ENCODE measurements at regions of chr3 and their contacts with region 1.

Region 1: GRCh38 chr3:88137836-88138235 is 11.9 kb upstream of the C3orf38 start:
- DNase-seq: no peak
- ATAC-seq: no peak
- H3K4me3 ChIP-seq: no peak overlapping the region
- H3K4me3 Mint-ChIP-seq: no peak overlapping the region
- H3K27ac ChIP-seq: no peak overlapping the region
- H3K27ac Mint-ChIP-seq: no peak overlapping the region
- H3K4me1 ChIP-seq: no peaks in the 10 kb centered on the region
- H3K4me1 Mint-ChIP-seq: peaks cover 0 to 5% (median 0%) of the 10 kb centered on the region in 7 donors
- H3K27me3 ChIP-seq: no peaks in the 10 kb centered on the region
- H3K27me3 Mint-ChIP-seq: no peaks in the 10 kb centered on the region

Region 2: DNA sequence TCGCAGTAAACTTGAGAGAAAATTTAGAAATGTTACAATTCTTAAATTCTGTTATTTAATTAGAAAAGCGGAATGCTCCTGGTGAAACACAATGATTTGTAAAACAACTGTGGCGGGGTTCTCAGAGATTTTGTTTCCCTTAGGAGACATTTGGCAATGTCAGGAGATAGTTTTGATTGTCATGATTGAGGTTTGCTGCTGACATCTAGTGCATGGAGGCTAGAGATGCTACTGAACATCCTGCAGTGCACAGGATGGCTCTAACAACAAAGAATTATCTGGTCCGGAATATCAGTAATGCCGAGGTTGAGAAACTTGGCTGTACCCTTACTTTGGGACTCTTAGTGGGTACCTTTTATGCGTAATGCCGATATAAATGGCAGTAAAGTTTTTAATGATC is 74.9 kb before region 1 on chr3:
- CTCF ChIA-PET with region 1: no interaction called
- POLR2A ChIA-PET with region 1: no interaction called
- intact Hi-C with region 1: no loop called
- DNase-seq: no peak
- ATAC-seq: no peak
- H3K4me3 ChIP-seq: no peak overlapping the region
- H3K4me3 Mint-ChIP-seq: peak overlapping the region in 5 of 10 donors; percentile 11 to 51 (median 24)
- H3K27ac ChIP-seq: no peak overlapping the region
- H3K27ac Mint-ChIP-seq: no peak overlapping the region
- H3K4me1 ChIP-seq: peaks cover 7 to 10% of the 10 kb centered on the region in 2 donors
- H3K4me1 Mint-ChIP-seq: peaks cover 36 to 69% (median 56%) of the 10 kb centered on the region in 7 donors
- H3K27me3 ChIP-seq: no peaks in the 10 kb centered on the region
- H3K27me3 Mint-ChIP-seq: no peaks in the 10 kb centered on the region

Region 3: GRCh38 chr3:88123526-88123925 is 14.3 kb before region 1 on chr3:
- CTCF ChIA-PET with region 1: no interaction called
- POLR2A ChIA-PET with region 1: no interaction called
- intact Hi-C with region 1: loop called in 1 of 2 experiments (anchors 2 kb)
- DNase-seq: no peak
- ATAC-seq: no peak
- H3K4me3 ChIP-seq: no peak overlapping the region
- H3K4me3 Mint-ChIP-seq: no peak overlapping the region
- H3K27ac ChIP-seq: no peak overlapping the region
- H3K27ac Mint-ChIP-seq: no peak overlapping the region
- H3K4me1 ChIP-seq: no peaks in the 10 kb centered on the region
- H3K4me1 Mint-ChIP-seq: peaks cover 8 to 26% (median 15%) of the 10 kb centered on the region in 7 donors
- H3K27me3 ChIP-seq: no peaks in the 10 kb centered on the region
- H3K27me3 Mint-ChIP-seq: no peaks in the 10 kb centered on the region